ENCODE measurements at regions of chr10 and their contacts with region 1.

Region 1: GRCh38 chr10:50367732-50368131 is 116.4 kb upstream of the ASAH2 start:
- DNase-seq: peak; percentile 58
- H3K4me3 Mint-ChIP-seq: no peak overlapping the region
- H3K27ac Mint-ChIP-seq: no peak overlapping the region
- H3K4me1 Mint-ChIP-seq: peaks cover 8% of the 10 kb centered on the region
- H3K27me3 Mint-ChIP-seq: no peaks in the 10 kb centered on the region
- CTCF ChIP-seq: peak; percentile 18

Region 2: DNA sequence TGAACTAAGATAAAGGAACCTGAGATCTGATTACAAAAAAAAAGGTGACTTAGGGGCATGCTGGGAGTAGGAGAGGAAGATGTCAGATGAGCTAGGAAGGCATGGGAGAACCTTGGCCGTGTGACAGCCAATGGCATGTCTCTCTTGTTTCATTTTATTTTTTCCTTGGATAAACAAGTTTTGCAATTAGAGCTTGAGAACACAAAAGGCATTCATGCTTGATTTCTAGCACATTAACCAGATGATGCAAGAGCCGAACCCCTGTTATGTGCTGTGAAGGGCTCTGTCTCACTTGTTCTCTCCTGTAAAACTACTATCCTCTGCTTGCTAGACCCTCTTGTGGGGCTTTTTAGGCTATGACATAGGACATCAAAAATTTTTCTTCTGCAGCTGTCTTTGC is 17.9 kb after region 1 on chr10:
- CTCF ChIA-PET with region 1: interaction called, 21 read pairs
- POLR2A ChIA-PET with region 1: interaction called, 5 read pairs
- intact Hi-C with region 1: no loop called
- DNase-seq: peak; percentile 74
- H3K4me3 Mint-ChIP-seq: no peak overlapping the region
- H3K27ac Mint-ChIP-seq: peak overlapping the region; percentile 84
- H3K4me1 Mint-ChIP-seq: peaks cover 19% of the 10 kb centered on the region
- H3K27me3 Mint-ChIP-seq: no peaks in the 10 kb centered on the region
- CTCF ChIP-seq: no peak

Region 3: DNA sequence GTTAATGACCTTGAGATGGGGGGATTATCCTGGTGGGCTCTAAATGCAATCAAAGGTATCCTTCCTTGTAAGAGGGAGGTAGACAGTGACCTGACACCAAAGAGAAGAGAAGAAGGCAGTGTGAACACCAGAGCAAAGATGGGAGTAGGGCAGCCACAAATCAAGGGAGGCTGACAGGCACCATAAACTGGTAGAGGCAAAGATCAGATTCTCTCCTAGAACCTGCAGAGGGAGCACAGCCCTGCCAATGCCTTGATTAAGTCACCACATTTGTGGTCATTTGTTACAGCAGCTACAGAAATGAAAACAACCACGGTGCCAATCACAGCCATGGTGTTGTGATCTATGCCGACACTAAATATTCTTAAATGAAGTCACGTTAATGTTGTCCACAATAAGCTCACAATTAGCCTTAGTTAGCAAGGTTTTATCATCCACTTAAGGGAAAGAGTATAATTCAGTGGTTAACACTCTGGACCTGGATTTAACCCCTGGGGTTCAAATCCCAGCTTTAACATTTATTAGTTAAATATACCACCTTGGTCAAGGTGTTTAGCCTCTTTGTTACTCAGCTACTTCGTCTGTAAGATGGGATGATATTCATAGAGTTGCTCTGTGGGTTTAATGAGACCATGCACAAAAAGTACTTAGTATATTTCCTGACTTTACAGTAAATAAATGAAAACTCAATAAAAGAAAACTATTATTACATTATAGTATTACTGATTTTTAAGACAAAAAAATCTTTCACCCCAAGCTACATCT is 185.2 kb after region 1 on chr10:
- CTCF ChIA-PET with region 1: interaction called, 3 read pairs
- POLR2A ChIA-PET with region 1: no interaction called
- intact Hi-C with region 1: loop called (anchors 5 kb)
- DNase-seq: peak; percentile 66
- H3K4me3 Mint-ChIP-seq: no peak overlapping the region
- H3K27ac Mint-ChIP-seq: peak overlapping the region; percentile 14
- H3K4me1 Mint-ChIP-seq: peaks cover 6% of the 10 kb centered on the region
- H3K27me3 Mint-ChIP-seq: no peaks in the 10 kb centered on the region
- CTCF ChIP-seq: peak; percentile 28

Region 4: GRCh38 chr10:50653142-50653541 is 285.4 kb after region 1 on chr10:
- CTCF ChIA-PET with region 1: interaction called, 3 read pairs
- POLR2A ChIA-PET with region 1: no interaction called
- intact Hi-C with region 1: loop called (anchors 2 kb)
- DNase-seq: peak; percentile 31
- H3K4me3 Mint-ChIP-seq: no peak overlapping the region
- H3K27ac Mint-ChIP-seq: no peak overlapping the region
- H3K4me1 Mint-ChIP-seq: peaks cover 10% of the 10 kb centered on the region
- H3K27me3 Mint-ChIP-seq: no peaks in the 10 kb centered on the region
- CTCF ChIP-seq: peak; percentile 47

Measured in MCF 10A (cell line).